HAP-1 (cell line): ENCODE measurements at regions of chr12 and their contacts with region 1.

Region 1: DNA sequence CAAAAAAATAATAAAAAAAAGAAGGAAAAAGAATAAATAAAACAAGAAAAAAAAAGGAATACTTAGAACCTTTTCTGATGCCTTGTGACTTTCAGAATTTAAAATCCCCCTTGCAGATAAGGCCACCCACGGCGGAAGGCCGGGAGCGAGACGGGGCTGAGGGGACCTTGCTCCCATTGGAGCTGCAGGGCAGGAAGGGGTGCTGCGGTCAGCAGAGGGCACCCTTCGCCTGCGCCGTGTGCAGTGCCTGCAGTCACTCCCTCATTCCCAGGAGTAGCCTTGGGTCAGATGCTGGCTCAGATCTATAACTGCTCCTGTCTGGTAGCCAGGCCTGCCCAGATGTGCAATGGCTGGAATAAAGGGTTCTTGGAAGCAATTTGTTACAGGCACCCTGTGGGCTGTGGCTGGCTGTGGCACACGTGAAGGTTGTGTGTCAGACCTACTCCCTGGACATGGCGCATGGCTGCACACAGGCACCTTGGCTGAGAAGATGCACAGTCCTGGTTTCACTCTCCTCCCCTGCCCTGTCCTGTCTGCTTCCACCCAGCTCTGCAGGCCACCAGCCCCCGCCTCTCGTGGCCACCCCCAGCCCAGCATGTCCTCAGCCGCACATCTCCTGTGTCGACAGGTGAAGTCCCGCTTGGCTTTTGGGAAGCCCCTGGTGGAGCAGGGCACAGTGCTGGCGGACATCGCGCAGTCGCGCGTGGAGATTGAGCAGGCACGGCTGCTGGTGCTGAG is 13.4 kb upstream of the ALDH2 start:
- DNase-seq: peak; percentile 38 to 69
- H3K4me3 ChIP-seq: no peak overlapping the region
- H3K4me1 ChIP-seq: no peaks in the 10 kb centered on the region
- H3K27me3 ChIP-seq: no peaks in the 10 kb centered on the region

Region 2: DNA sequence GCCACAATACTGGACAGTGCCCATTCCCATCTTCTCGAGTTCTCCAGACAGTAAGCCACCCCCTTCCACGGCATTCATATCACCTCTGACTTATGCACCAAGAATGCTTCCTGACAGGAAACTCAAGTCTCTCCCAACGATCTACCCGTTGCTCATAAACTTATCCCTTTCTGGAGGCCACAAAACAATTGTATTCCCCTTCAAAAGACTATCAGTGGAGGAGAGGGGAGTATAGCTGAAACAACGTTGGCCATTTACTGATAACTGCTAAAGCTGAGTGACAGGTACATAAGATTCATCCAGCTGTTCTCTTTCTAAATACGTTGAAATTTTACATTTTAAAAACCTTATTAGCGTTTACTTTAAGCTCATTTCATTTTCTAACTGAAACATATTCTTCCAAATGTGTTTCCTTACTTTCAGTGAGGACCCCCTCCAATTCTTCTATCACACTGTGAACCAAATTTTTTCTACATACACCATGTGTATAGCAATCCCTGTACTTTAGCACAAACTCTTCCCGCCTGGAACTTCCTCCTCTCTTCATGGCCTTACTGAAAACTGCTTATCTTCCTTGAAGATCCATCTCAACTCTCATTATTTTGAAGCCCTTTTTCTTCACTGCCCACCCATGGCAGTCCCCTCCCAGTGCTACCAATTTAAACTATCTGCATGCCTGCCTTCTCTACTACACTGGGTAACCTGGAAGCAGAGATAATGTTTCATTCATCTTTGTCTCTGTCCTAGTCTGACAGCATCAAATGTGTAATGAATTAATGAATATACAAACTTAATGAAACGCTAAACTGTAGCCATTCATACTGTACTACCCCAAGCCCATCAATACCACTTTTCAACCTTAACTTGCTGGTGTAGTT is 183.0 kb before region 1 on chr12:
- in situ Hi-C with region 1: no loop called
- DNase-seq: no peak
- H3K4me3 ChIP-seq: no peak overlapping the region
- H3K4me1 ChIP-seq: no peaks in the 10 kb centered on the region
- H3K27me3 ChIP-seq: no peaks in the 10 kb centered on the region

Region 3: GRCh38 chr12:111812881-111813741 is 59.8 kb after region 1 on chr12:
- in situ Hi-C with region 1: loop called (anchors 5 kb)
- DNase-seq: peak; percentile 76 to 86
- H3K4me3 ChIP-seq: no peak overlapping the region
- H3K4me1 ChIP-seq: peaks cover 6% of the 10 kb centered on the region; the same call in 1 of the 2 replicates
- H3K27me3 ChIP-seq: no peaks in the 10 kb centered on the region

Region 4: DNA sequence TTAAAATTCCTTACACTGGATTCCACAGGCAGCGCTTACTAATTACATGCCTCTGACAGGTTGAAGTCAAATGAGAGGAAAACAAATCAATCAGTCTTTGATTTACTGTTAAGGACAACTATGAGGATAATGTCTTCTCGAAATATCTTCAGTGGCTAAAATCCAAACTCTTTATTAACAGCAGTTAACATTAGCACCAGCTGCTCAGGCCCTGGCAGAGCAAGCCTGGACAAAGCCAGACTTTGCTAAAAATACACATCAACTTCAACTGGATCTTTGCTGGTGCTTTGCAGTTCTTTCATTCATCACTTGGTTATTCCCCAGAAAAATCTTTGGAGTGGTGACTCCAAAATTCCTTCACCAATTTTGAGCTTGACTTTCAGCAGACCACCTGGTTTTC is 530.2 kb after region 1 on chr12:
- in situ Hi-C with region 1: no loop called
- DNase-seq: no peak
- H3K4me3 ChIP-seq: no peak overlapping the region
- H3K4me1 ChIP-seq: no peaks in the 10 kb centered on the region
- H3K27me3 ChIP-seq: no peaks in the 10 kb centered on the region